Activated CD4-positive, alpha-beta memory T cell treated with anti-CD3 and anti-CD28 coated beads for 36 hours (primary cell): ENCODE measurements at regions of chr1 and their contacts with region 1.

Region 1: DNA sequence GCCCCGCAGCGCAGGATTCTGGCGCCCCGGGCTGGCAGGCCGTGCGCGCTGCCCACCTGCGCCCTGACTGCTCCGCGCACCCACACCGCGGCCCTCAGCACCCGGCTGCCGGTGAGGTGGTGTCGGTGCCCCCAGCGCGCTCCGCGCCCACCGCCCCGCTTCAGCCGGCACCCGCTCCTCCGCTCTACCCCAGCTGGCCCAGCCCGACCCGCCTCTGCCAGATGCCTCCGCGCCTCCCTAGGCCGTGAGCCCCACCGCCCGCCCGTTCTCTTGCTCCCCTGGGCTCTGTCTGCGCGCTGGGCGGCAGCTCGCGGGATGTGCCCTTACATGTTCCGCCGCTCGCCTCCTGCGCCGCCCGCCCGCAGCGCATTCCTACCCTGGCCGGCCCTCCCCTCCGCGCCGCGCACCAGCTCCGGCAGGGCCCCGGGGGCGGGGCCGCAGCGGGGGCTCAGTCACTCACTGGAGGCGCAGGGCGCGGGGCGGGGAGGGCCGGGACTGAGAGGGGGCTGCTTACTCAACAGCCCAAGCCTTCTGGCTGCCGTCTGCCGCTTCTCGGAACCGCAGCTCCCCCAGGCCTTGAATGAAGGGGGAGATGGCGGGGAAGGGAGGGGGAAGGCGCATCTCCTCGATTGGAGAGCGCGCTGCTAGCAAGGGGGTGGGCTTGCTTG is at the start of gene PHLDA3:
- DNase-seq: peak; percentile 69
- H3K4me3 Mint-ChIP-seq: peak within 1 kb of the TSS; percentile 64
- H3K27ac Mint-ChIP-seq: no peak within 1 kb of the TSS
- H3K4me1 Mint-ChIP-seq: peaks cover 6% of the 10 kb centered on the region
- H3K27me3 Mint-ChIP-seq: peaks cover 36% of the 10 kb centered on the region
- total RNA-seq, gene PHLDA3: 3.4 to 4.1 TPM

Region 2: GRCh38 chr1:201447911-201448871 is 20.8 kb before region 1 on chr1:
- CTCF ChIA-PET with region 1: interaction called, 11 read pairs
- POLR2A ChIA-PET with region 1: no interaction called
- intact Hi-C with region 1: no loop called
- DNase-seq: peak; percentile 82
- H3K4me3 Mint-ChIP-seq: no peak overlapping the region
- H3K27ac Mint-ChIP-seq: no peak overlapping the region
- H3K4me1 Mint-ChIP-seq: peaks cover 2% of the 10 kb centered on the region
- H3K27me3 Mint-ChIP-seq: peaks cover 15% of the 10 kb centered on the region